CD8-positive, alpha-beta T cell (primary cell): ENCODE measurements at regions of chr10 and their contacts with region 1.

Region 1: DNA sequence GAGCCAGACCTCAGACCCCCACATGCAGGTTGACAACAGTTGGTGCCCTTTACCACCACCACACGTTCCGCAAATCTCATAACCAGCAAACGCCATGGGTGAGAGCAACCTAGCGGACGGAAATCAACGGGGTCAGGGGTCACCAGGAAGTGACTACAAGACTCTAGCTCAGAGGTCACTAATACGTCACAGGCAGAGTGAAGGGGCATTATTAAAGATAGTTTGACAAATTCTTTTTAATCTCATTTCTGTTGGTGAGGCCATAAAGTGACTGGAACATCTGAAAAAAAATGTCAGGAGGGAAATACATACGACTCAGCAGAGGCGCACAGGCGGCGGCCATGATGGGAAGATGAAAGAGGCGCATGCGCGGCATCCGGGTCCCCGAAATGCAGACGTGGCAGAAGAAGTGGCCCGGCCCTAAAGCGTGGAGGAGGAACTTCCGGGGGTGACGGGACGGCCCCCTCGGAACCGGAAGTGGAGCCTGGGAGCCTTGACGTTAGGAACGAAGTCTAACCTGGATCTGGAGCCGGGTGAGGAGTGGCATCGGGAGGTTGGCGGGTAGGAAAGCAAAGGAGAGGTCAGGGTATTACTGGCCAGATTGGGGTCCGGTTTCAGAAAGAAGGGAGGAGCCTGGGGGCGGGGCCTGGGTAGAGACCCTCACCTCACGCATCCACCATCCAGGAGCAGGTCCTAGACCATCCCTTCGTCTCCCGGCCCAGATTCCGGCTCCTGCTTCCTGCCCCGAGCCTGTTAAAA is at the start of gene SEC24C:
- DNase-seq: peak; percentile 91 to 99 (median 95)
- ATAC-seq: peak; percentile 89
- H3K4me3 ChIP-seq: peak within 1 kb of the TSS; percentile 78 to 79
- H3K4me3 Mint-ChIP-seq: peak within 1 kb of the TSS; percentile 100
- H3K27ac ChIP-seq: peak within 1 kb of the TSS; percentile 94
- H3K27ac Mint-ChIP-seq: peak within 1 kb of the TSS; percentile 100
- H3K4me1 ChIP-seq: peaks cover 31% of the 10 kb centered on the region
- H3K4me1 Mint-ChIP-seq: peaks cover 38% of the 10 kb centered on the region
- H3K27me3 ChIP-seq: no peaks in the 10 kb centered on the region
- H3K27me3 Mint-ChIP-seq: no peaks in the 10 kb centered on the region
- CTCF ChIP-seq: no peak
- total RNA-seq, gene SEC24C: 76.9 to 78.6 TPM

Region 2: DNA sequence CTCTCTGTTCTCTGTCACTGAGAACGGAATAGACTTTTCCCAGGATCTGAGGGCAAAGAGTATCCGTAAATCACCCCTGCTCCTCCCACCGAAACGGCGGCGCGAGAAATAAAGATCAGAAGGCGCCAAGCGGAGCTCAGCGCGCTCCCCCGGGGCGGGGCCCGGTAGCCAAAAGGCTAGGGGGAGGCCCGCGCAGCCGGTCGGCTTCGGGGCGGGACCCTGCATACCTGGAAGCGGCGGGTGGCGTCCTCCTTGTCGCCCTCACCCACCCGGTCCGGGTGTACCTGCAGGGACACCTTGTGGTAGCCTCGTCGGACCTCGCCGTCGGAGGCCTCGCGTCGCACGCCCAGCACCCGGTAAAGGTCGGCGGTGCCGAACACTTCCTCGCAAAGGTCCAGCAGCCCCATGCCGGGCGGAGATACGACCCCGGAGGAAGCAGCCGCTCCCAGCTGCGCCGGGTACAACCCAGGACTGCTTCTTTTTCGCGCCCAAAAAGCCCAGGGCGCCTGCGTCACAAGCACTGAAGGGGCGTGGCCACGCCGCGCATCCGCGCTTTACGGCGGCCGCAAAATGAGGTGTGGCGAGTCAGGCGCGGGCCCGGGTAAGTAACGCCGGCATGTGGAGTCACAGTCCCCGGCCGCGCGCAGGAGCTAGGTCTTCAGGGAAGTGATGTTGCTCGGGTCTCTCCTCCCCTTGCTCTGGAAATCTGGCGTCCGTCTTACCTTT is 497.1 kb before region 1 on chr10 and contains the start of gene DNAJC9:
- CTCF ChIA-PET with region 1: no interaction called
- POLR2A ChIA-PET with region 1: no interaction called
- intact Hi-C with region 1: loop called in 1 of 2 experiments (anchors 2 kb)
- DNase-seq: peak; percentile 95 to 98 (median 97)
- ATAC-seq: peak; percentile 88
- H3K4me3 ChIP-seq: peak within 1 kb of the TSS; percentile 88 to 95
- H3K4me3 Mint-ChIP-seq: peak within 1 kb of the TSS; percentile 96
- H3K27ac ChIP-seq: peak within 1 kb of the TSS; percentile 85 to 89
- H3K27ac Mint-ChIP-seq: peak within 1 kb of the TSS; percentile 97
- H3K4me1 ChIP-seq: peaks cover 34% of the 10 kb centered on the region
- H3K4me1 Mint-ChIP-seq: peaks cover 59% of the 10 kb centered on the region
- H3K27me3 ChIP-seq: no peaks in the 10 kb centered on the region
- H3K27me3 Mint-ChIP-seq: no peaks in the 10 kb centered on the region
- CTCF ChIP-seq: peak; percentile 19
- total RNA-seq, gene DNAJC9: 17.6 to 18.4 TPM

Region 3: DNA sequence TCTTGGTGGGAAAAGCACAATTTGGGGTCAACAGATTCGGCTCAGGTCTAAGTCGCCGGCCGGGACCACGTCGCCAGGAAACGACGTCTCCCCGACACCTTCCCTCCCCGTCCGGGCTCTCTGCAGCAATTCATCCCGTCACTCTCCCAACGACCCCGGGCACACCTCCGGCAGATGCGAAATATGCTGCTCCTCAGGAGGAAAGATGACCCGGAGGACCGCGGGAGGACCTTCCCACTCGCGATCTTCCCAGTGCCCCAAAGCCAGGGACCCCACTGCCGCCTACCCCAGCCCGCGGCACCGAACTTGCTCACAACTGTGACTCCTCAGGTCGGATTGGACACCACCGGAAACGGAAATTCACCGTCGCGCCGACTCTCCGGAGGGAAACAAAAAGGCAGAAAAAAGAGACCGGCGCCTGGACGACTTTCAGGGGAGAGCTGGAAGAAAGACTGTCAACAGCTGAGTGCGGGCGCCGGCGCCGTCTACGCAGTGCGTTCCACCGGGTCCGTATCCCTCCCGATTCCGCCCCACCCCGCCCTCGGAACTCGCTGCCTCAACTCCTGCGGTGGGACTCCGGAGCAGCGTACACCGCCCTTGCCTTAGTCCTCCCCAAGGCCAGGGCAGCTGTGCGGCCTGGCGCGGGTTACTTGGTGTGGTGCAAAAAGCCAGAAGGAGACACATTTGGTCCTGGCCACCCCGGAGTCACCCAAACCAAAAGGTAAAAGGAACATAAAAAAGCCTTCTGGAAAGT is 13.8 kb before region 1 on chr10:
- CTCF ChIA-PET with region 1: interaction called, 8 read pairs
- POLR2A ChIA-PET with region 1: interaction called, 32 read pairs
- intact Hi-C with region 1: loop called (anchors 1 kb)
- DNase-seq: peak; percentile 86 to 95 (median 89)
- ATAC-seq: peak; percentile 89
- H3K4me3 ChIP-seq: peak overlapping the region; percentile 98 to 100
- H3K4me3 Mint-ChIP-seq: peak overlapping the region; percentile 100
- H3K27ac ChIP-seq: peak overlapping the region; percentile 87 to 91
- H3K27ac Mint-ChIP-seq: peak overlapping the region; percentile 99
- H3K4me1 ChIP-seq: peaks cover 13% of the 10 kb centered on the region
- H3K4me1 Mint-ChIP-seq: peaks cover 29% of the 10 kb centered on the region
- H3K27me3 ChIP-seq: no peaks in the 10 kb centered on the region
- H3K27me3 Mint-ChIP-seq: no peaks in the 10 kb centered on the region
- CTCF ChIP-seq: no peak

Region 4: GRCh38 chr10:73772280-73773151 is 28.4 kb after region 1 on chr10:
- CTCF ChIA-PET with region 1: interaction called, 6 read pairs
- POLR2A ChIA-PET with region 1: interaction called, 30 read pairs
- intact Hi-C with region 1: loop called (anchors 1 kb)
- DNase-seq: peak; percentile 52 to 95 (median 78)
- ATAC-seq: peak; percentile 66
- H3K4me3 ChIP-seq: peak overlapping the region; percentile 92 to 96
- H3K4me3 Mint-ChIP-seq: peak overlapping the region; percentile 96
- H3K27ac ChIP-seq: peak overlapping the region; percentile 86 to 94
- H3K27ac Mint-ChIP-seq: peak overlapping the region; percentile 96
- H3K4me1 ChIP-seq: peaks cover 37% of the 10 kb centered on the region
- H3K4me1 Mint-ChIP-seq: peaks cover 59% of the 10 kb centered on the region
- H3K27me3 ChIP-seq: no peaks in the 10 kb centered on the region
- H3K27me3 Mint-ChIP-seq: no peaks in the 10 kb centered on the region
- CTCF ChIP-seq: no peak

Region 5: GRCh38 chr10:73810735-73811465 is 66.8 kb after region 1 on chr10:
- CTCF ChIA-PET with region 1: no interaction called
- POLR2A ChIA-PET with region 1: interaction called, 10 read pairs
- intact Hi-C with region 1: loop called (anchors 1 kb)
- DNase-seq: peak; percentile 19 to 79 (median 66)
- ATAC-seq: peak; percentile 12
- H3K4me3 ChIP-seq: peak overlapping the region; percentile 56 to 87
- H3K4me3 Mint-ChIP-seq: peak overlapping the region; percentile 89
- H3K27ac ChIP-seq: peak overlapping the region; percentile 71 to 91
- H3K27ac Mint-ChIP-seq: peak overlapping the region; percentile 95
- H3K4me1 ChIP-seq: peaks cover 48% of the 10 kb centered on the region
- H3K4me1 Mint-ChIP-seq: peaks cover 44% of the 10 kb centered on the region
- H3K27me3 ChIP-seq: no peaks in the 10 kb centered on the region
- H3K27me3 Mint-ChIP-seq: no peaks in the 10 kb centered on the region
- CTCF ChIP-seq: no peak

Region 6: DNA sequence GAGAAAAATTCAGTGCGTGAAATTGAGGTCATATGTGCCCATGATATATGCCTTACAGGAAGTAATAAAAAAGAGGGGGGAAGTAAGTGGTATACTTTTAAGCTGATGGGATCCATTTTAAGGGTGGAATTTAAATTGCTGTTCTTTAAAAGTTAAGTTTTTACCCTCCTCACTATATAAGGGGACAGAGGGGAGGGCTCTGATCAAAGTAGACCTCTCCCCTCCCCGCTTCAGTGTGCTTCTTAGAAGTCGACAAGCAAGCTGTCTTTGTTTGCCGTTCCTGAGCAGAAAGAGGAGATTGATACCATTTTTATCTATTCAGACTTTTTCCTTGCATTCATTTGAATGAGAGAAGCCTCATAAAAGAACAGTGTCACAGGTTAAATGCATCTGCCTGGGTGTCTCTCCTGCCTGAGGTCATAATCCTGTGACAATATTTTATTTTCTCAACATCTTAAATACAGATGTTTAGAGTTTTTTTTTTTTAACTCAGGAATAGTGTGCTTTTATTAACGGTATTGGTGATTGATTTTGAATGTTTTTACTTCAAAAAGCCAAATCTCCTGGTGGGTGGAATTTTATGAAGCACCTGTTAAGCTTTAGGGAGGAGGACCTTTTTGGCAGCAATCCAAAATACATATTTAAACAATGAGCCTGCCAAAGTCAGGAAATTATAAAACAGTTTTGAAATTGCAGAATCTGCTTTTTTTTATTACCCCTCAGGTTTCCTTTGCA is 1224.0 kb after region 1 on chr10:
- CTCF ChIA-PET with region 1: no interaction called
- POLR2A ChIA-PET with region 1: no interaction called
- intact Hi-C with region 1: no loop called
- DNase-seq: peak in 3 of 9 experiments; percentile 21 to 56 (median 32)
- ATAC-seq: peak; percentile 77
- H3K4me3 ChIP-seq: peak overlapping the region in 1 of 2 experiments; percentile 5
- H3K4me3 Mint-ChIP-seq: peak overlapping the region; percentile 76
- H3K27ac ChIP-seq: peak overlapping the region; percentile 48 to 71
- H3K27ac Mint-ChIP-seq: peak overlapping the region; percentile 96
- H3K4me1 ChIP-seq: peaks cover 32% of the 10 kb centered on the region
- H3K4me1 Mint-ChIP-seq: peaks cover 41% of the 10 kb centered on the region
- H3K27me3 ChIP-seq: no peaks in the 10 kb centered on the region
- H3K27me3 Mint-ChIP-seq: no peaks in the 10 kb centered on the region
- CTCF ChIP-seq: no peak